ENCODE measurements at regions of chr20 and their contacts with region 1.

Region 1: DNA sequence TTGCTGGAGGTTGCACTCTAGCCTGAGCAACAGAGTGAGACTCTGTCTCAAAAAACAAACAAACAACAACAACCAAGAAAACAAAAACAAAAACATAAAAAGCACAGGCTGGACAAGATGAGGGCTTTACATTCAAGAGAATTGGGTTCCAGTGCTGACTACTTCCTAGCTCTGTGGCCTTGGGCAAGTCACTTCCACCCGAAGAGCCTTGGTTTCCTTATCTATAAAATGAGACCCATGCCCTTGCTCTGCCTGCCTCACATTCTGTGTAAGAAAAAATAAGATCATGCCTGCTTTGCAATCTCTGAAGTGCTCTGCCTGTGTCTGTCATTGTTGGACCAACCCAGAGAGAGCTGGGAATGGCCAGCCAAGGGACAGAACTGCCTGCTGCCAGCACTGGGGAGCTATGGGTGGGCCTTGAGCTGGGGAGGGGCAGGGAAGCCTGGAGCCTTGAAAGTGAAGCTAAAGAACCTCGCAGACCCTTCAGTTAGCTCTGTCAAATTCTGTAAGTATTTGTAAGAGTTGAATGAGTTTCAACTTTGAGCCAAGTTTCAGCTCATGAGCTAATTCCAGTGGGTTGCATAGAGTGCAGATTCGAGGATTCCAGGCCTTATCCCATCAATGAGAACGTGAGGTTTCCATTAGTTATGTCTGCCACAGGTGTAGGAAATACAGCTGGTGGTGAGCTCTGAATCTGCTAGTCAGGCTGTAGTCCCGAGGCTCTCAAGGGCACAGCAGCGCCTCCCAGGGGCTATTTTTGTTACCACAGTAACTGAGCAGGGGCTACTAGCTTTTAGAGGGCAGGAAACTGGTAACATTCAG is 93.2 kb downstream of the DLGAP4 start:
- DNase-seq: peak; percentile 78 to 97
- H3K4me3 ChIP-seq: no peak overlapping the region
- H3K27ac ChIP-seq: no peak overlapping the region
- H3K4me1 ChIP-seq: peaks cover 0 to 6% (median 3%) of the 10 kb centered on the region in 4 experiments; a peak in 4 of 7 replicates
- H3K27me3 ChIP-seq: no peaks in the 10 kb centered on the region
- CTCF ChIP-seq: peak; percentile 75 to 97 (median 91)
- EP300 ChIP-seq: peak in 1 of 2 experiments; percentile 52; a peak in 1 of 3 replicates
- POLR2A ChIP-seq: no peak
- RAD21 ChIP-seq: peak; percentile 89 to 95

Region 2: GRCh38 chr20:36199345-36200257 is 199.8 kb before region 1 on chr20:
- CTCF ChIA-PET with region 1: interaction called, 13 read pairs
- POLR2A ChIA-PET with region 1: no interaction called
- DNase-seq: peak; percentile 53 to 96
- H3K4me3 ChIP-seq: no peak overlapping the region
- H3K27ac ChIP-seq: no peak overlapping the region
- H3K4me1 ChIP-seq: no peaks in the 10 kb centered on the region
- H3K27me3 ChIP-seq: no peaks in the 10 kb centered on the region
- CTCF ChIP-seq: peak; percentile 84 to 97 (median 85)
- EP300 ChIP-seq: no peak
- POLR2A ChIP-seq: no peak
- RAD21 ChIP-seq: peak; percentile 85 to 86

Region 3: DNA sequence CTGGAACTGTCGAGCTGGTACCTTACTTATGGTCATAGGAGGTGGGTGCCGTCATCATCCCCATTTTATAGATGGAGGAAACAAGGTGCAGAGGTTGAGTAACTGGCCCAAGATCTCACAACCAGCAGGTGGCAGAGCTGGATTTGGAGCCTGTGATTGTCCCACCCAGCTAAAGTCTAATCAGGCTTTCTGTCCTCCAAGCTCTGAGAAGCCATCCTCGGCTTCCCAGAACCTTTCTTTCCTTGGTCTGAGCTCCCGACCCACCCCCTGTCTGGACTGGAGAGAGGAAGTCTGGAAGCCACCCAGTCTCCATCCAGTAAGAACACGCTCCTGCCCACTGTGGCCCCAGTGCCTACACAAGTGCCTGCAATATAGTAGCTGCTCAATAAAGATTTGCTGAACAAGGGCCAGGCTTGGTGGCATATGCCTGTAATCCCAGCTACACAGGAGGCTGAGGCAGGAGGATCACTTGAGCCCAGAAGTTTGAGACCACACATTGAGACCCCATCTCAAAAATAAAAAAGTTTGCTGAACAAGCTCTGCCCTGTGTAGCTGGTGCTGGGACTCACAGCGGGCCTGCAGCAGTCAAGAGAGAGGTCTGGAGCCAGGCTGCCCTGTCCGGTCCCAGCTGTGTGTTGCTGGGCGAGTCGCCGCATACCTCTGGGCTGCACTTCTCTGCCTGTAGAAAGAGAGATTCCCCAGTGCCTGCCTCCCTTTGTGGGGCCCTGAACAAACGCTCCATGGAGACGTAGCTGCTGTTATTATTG is 125.8 kb before region 1 on chr20:
- CTCF ChIA-PET with region 1: interaction called, 38 read pairs
- POLR2A ChIA-PET with region 1: no interaction called
- DNase-seq: peak in 1 of 2 experiments; percentile 41
- H3K4me3 ChIP-seq: no peak overlapping the region
- H3K27ac ChIP-seq: no peak overlapping the region
- H3K4me1 ChIP-seq: no peaks in the 10 kb centered on the region; a peak in 2 of 7 replicates
- H3K27me3 ChIP-seq: no peaks in the 10 kb centered on the region
- CTCF ChIP-seq: peak; percentile 33 to 43 (median 36); a peak in 3 of 4 replicates
- EP300 ChIP-seq: no peak
- POLR2A ChIP-seq: no peak
- RAD21 ChIP-seq: peak; percentile 49 to 59

Region 4: GRCh38 chr20:36307412-36308325 is 91.7 kb before region 1 on chr20:
- CTCF ChIA-PET with region 1: interaction called, 12 read pairs
- POLR2A ChIA-PET with region 1: interaction called, 3 read pairs
- DNase-seq: peak in 1 of 2 experiments; percentile 64
- H3K4me3 ChIP-seq: peak overlapping the region; percentile 57 to 80 (median 63)
- H3K27ac ChIP-seq: no peak overlapping the region
- H3K4me1 ChIP-seq: peaks cover 0 to 9% (median 4%) of the 10 kb centered on the region in 4 experiments; a peak in 6 of 7 replicates
- H3K27me3 ChIP-seq: peaks cover 0 to 30% (median 22%) of the 10 kb centered on the region in 4 experiments; a peak in 6 of 7 replicates
- CTCF ChIP-seq: no peak
- EP300 ChIP-seq: no peak
- POLR2A ChIP-seq: no peak
- RAD21 ChIP-seq: no peak

Region 5: GRCh38 chr20:36377352-36378326 is 21.7 kb before region 1 on chr20:
- CTCF ChIA-PET with region 1: interaction called, 42 read pairs
- POLR2A ChIA-PET with region 1: no interaction called
- DNase-seq: no peak
- H3K4me3 ChIP-seq: no peak overlapping the region
- H3K27ac ChIP-seq: no peak overlapping the region
- H3K4me1 ChIP-seq: 0 out of 7 replicates have a peak, but pooled peaks cover 0 to 2% (median 0%) of the 10 kb centered on the region in 4 experiments
- H3K27me3 ChIP-seq: no peaks in the 10 kb centered on the region
- CTCF ChIP-seq: no peak
- EP300 ChIP-seq: no peak
- POLR2A ChIP-seq: no peak
- RAD21 ChIP-seq: no peak

Region 6: DNA sequence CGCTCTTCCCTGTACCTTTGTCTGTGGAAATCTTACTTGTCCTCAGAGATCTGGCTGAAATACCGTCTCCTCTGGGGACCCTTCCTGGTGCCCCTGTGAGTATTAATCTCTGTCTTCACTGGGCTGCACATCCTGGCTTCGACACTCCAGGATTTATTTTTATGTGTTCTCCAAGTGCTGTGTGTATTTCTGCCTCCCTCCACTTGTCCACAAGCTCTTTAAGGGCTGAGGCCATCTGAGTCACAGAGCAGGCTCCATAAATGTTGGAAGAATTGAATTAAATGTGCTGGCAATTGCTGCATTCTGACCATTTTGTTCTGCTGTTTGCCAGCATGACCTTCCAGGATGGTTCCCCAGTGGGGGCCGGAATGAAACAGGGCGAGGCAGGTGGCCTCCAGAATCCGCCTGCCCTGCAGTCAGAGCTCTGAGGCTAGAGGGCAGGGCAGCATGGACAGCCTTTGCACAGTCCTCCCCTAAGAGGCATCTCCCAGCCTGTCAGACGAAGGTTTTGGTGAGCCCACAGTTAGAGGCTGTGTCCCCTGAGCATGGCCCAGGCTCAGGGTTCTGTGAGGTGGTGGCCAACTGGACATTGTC is 12.6 kb after region 1 on chr20:
- CTCF ChIA-PET with region 1: interaction called, 17 read pairs
- POLR2A ChIA-PET with region 1: interaction called, 3 read pairs
- DNase-seq: no peak
- H3K4me3 ChIP-seq: no peak overlapping the region
- H3K27ac ChIP-seq: no peak overlapping the region
- H3K4me1 ChIP-seq: no peaks in the 10 kb centered on the region
- H3K27me3 ChIP-seq: no peaks in the 10 kb centered on the region; a peak in 1 of 7 replicates
- CTCF ChIP-seq: no peak
- EP300 ChIP-seq: no peak
- POLR2A ChIP-seq: no peak
- RAD21 ChIP-seq: no peak

Region 7: GRCh38 chr20:36988494-36988966 is 589.2 kb after region 1 on chr20:
- CTCF ChIA-PET with region 1: no interaction called
- POLR2A ChIA-PET with region 1: no interaction called
- DNase-seq: no peak
- H3K4me3 ChIP-seq: no peak overlapping the region
- H3K27ac ChIP-seq: no peak overlapping the region
- H3K4me1 ChIP-seq: no peaks in the 10 kb centered on the region
- H3K27me3 ChIP-seq: no peaks in the 10 kb centered on the region
- CTCF ChIP-seq: no peak
- EP300 ChIP-seq: no peak
- POLR2A ChIP-seq: no peak
- RAD21 ChIP-seq: no peak